Activated CD8-positive, alpha-beta T cell treated with anti-CD3 and anti-CD28 coated beads, Interleukin-2, amount 10 ng/mL, durations not matched to agents 7 days and 5 days (primary cell): ENCODE measurements at regions of chr17 and their contacts with region 1.

Region 1: GRCh38 chr17:76452660-76453430 is at the start of gene UBE2O:
- DNase-seq: peak; percentile 95
- ATAC-seq: peak; percentile 91
- H3K4me3 Mint-ChIP-seq: peak within 1 kb of the TSS; percentile 91
- H3K27ac Mint-ChIP-seq: peak within 1 kb of the TSS; percentile 82
- H3K4me1 Mint-ChIP-seq: peaks cover 40% of the 10 kb centered on the region
- H3K27me3 Mint-ChIP-seq: peaks cover 3% of the 10 kb centered on the region
- total RNA-seq, gene UBE2O: 28.4 to 31.6 TPM

Region 2: DNA sequence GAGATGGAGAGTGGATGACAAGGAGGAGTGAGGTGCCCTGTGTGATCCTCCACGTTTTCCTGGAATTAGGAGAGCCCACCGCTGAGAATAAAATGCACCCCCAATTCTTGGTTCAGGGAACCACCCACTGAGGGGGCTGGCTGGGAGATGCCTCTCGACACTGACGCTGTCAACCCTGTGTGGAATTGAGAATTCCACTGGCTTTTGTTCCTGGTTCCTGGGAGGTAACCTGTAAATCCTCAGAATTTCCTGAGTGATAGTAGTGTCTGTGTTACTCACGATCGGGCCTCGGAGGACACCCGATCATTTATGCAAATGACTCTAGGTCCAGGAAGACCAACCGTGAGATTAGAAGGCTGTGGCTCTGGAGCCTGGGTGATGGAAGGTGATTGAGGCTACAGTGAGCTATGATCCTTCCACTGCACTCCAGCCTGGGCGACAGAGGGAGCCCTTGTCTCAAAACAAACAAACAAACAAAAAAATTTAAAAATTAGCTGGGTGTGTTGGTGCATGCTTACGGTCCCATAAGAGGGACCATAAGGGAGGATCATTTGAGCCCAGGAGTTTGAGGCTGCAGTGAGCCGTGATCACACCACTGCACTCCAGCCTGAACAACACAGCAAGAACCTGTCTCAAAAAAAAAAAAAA is 87.5 kb before region 1 on chr17:
- CTCF ChIA-PET with region 1: no interaction called
- POLR2A ChIA-PET with region 1: no interaction called
- DNase-seq: no peak
- ATAC-seq: no peak
- H3K4me3 Mint-ChIP-seq: no peak overlapping the region
- H3K27ac Mint-ChIP-seq: no peak overlapping the region
- H3K4me1 Mint-ChIP-seq: no peaks in the 10 kb centered on the region
- H3K27me3 Mint-ChIP-seq: peaks cover 3% of the 10 kb centered on the region

Region 3: GRCh38 chr17:76467366-76467765 is 14.5 kb after region 1 on chr17 and contains the start of gene AANAT:
- CTCF ChIA-PET with region 1: interaction called, 15 read pairs
- POLR2A ChIA-PET with region 1: interaction called, 3 read pairs
- DNase-seq: no peak
- ATAC-seq: no peak
- H3K4me3 Mint-ChIP-seq: no peak within 1 kb of the TSS
- H3K27ac Mint-ChIP-seq: no peak within 1 kb of the TSS
- H3K4me1 Mint-ChIP-seq: peaks cover 9% of the 10 kb centered on the region
- H3K27me3 Mint-ChIP-seq: no peaks in the 10 kb centered on the region
- total RNA-seq, gene AANAT: not detected